HepG2 (cell line): ENCODE measurements at regions of chr13 and their contacts with region 1.

Region 1: DNA sequence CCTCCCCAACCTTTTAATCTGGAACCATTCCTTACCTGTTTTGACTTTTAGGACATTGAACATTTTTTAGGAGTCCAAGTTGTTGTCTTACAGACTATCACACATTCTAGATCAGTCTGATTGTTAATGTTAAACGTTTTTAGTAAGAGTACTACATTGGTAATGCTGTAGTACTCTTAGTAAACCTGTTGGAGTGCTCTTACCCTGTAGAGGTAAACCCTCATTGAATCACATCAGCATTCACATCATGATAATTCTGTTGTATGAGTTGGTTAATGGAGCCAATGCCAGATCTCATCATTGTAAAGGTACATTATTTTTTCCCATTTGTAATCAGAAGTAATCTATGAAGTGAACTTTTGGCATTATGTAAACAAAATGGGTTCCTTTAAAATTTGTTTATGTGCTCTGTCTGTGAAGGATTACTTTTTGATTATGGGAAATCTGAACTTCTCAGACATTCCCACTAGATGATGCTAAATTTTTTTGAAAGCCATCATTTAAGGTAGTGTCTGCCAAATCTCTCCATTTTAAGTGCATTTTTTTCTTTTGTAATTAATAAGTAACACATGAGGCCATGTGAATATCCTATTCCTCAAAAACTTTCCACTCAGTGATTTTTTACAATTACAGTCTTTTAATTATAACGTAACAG is 55.2 kb downstream of the VWA8 start:
- DNase-seq: peak; percentile 28
- ATAC-seq: peak; percentile 93
- H3K4me3 ChIP-seq: no peak overlapping the region
- H3K27ac ChIP-seq: no peak overlapping the region
- H3K4me1 ChIP-seq: peaks cover 9% of the 10 kb centered on the region
- H3K27me3 ChIP-seq: no peaks in the 10 kb centered on the region
- CTCF ChIP-seq: peak; percentile 40
- EP300 ChIP-seq: no peak
- POLR2A ChIP-seq: no peak
- RAD21 ChIP-seq: no peak

Region 2: GRCh38 chr13:41864658-41865057 is 41.1 kb before region 1 on chr13:
- CTCF ChIA-PET with region 1: no interaction called
- POLR2A ChIA-PET with region 1: no interaction called
- in situ Hi-C with region 1: no loop called
- intact Hi-C with region 1: loop called (anchors 1 kb)
- DNase-seq: no peak
- ATAC-seq: no peak
- H3K4me3 ChIP-seq: no peak overlapping the region
- H3K27ac ChIP-seq: no peak overlapping the region
- H3K4me1 ChIP-seq: no peaks in the 10 kb centered on the region
- H3K27me3 ChIP-seq: no peaks in the 10 kb centered on the region
- CTCF ChIP-seq: no peak
- EP300 ChIP-seq: no peak
- POLR2A ChIP-seq: no peak
- RAD21 ChIP-seq: no peak